ENCODE measurements at regions of chr10 and their contacts with region 1.

Region 1: GRCh38 chr10:110042181-110042580 is 34.4 kb downstream of the ADD3 start:
- DNase-seq: no peak
- ATAC-seq: no peak
- H3K4me3 ChIP-seq: no peak overlapping the region
- H3K27ac ChIP-seq: peak overlapping the region in 3 of 10 donors; percentile 5 to 36 (median 26)
- H3K4me1 ChIP-seq: peaks cover 0 to 67% (median 48%) of the 10 kb centered on the region in 9 donors
- H3K27me3 ChIP-seq: no peaks in the 10 kb centered on the region
- CTCF ChIP-seq: no peak

Region 2: GRCh38 chr10:110022716-110023504 is 19.3 kb before region 1 on chr10:
- intact Hi-C with region 1: loop called in 1 of 10 experiments (anchors 1 kb)
- DNase-seq: no peak
- ATAC-seq: peak in 3 of 8 donors; percentile 15 to 37 (median 24)
- H3K4me3 ChIP-seq: no peak overlapping the region
- H3K27ac ChIP-seq: peak overlapping the region in 5 of 10 donors; percentile 10 to 49 (median 24)
- H3K4me1 ChIP-seq: peaks cover 0 to 60% (median 32%) of the 10 kb centered on the region in 9 donors
- H3K27me3 ChIP-seq: no peaks in the 10 kb centered on the region
- CTCF ChIP-seq: no peak

Region 3: DNA sequence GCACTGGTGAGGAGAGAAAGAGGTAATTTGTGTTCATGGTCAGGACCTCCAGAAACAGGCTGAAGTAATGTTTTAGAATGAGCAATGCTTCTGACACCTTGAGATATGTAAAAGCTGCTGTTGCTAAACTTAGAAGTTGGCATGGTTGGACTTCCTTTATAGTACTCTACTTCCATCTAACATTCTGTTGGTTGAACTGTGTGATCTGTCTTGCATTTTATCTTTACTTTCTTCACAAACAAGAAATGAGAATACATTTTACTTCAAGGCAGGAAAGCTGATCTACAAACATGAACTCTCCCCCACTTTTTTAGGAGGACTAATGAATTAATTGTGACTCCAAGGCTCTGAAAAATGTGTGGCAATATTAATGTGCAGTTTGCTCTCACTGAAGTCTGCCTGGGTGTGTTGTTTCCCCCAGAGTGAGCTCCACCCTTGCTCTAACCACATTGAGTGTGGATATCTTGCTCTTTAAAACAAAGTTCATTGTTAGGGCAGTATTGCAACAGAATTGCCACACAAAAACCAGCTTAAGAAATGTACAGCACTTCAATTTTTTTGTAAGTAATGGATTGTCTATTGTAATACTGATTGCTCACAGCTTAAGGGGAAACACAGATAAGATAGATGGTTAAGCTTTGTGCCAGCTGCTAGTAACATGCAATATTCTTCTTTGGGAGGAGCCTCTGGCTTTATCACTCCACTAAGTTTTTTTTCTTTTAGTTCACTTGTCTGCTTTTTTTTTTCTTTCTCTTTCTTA is 34.6 kb after region 1 on chr10:
- intact Hi-C with region 1: no loop called
- DNase-seq: peak in 1 of 2 donors; percentile 44
- ATAC-seq: peak; percentile 69 to 91 (median 83)
- H3K4me3 ChIP-seq: peak overlapping the region in 7 of 10 donors; percentile 16 to 37 (median 29)
- H3K27ac ChIP-seq: peak overlapping the region; percentile 24 to 92 (median 82)
- H3K4me1 ChIP-seq: peaks cover 2 to 96% (median 86%) of the 10 kb centered on the region in 9 donors
- H3K27me3 ChIP-seq: no peaks in the 10 kb centered on the region
- CTCF ChIP-seq: no peak